ENCODE measurements at regions of chr18 and their contacts with region 1.

Region 1: DNA sequence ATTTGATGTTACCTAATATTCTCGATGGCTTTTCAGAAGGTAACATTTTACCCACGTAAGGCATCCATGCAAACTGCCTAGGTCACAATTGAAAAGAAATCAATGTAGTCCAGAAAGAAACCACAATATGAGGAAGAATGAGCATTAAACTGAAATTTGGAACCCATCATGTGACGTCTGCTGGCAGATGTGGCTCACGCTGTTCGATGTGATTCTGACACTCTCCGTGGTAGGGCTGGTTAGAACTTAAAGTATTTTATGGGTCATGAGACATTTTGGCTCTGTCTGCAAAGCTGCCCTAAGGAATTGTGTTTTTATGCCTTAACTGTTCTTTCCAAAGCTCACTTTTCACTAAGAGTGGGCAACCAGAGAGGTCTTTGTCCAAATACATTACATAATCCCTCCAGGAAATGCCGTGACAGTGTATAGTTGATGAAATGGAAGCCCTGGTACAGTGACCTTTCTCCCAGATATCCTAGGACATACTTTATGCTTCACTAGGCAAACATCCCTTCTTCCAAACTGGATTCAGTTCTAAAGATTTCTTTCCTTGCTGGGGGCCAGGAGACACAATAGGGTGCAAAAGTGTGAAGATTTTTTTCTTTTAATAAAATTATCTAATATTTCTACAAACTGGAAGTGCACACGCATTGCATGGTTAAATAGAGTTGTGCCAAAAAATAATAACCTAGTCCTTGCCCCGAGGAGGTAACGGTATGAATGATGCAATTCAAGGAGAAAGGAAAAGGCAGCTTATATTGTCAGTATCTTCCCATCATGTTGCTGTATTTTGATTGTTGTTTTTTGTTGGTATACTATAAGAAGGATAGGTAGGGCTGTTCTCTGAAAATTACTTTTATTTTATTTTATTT is 119.0 kb downstream of the AQP4 start:
- DNase-seq: peak; percentile 10
- ATAC-seq: no peak
- H3K4me3 ChIP-seq: no peak overlapping the region
- H3K27ac ChIP-seq: no peak overlapping the region
- H3K4me1 ChIP-seq: peaks cover 42% of the 10 kb centered on the region
- H3K27me3 ChIP-seq: no peaks in the 10 kb centered on the region
- CTCF ChIP-seq: no peak
- EP300 ChIP-seq: no peak
- POLR2A ChIP-seq: no peak
- RAD21 ChIP-seq: no peak

Region 2: DNA sequence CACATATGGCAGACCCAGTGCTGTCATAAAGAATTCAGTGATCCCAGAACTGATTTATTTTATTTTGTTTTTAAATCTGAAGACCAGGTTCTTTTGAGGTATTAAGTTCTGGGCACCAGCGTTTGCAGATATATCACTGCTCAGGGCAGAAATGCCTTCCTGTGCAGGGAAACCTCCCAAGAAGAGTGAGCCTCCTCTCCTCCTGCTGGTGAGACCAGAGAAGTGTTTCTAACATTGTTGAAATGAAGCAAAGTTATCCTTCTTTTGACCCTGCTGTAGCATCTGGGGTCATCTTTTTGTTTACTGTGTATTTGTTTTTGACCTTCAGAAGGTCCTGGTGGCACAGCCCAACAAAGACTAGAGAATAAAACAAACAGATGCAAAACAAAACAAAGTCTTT is 25.0 kb after region 1 on chr18:
- CTCF ChIA-PET with region 1: no interaction called
- POLR2A ChIA-PET with region 1: no interaction called
- in situ Hi-C with region 1: no loop called
- intact Hi-C with region 1: no loop called
- DNase-seq: peak; percentile 6
- ATAC-seq: peak; percentile 78
- H3K4me3 ChIP-seq: no peak overlapping the region
- H3K27ac ChIP-seq: no peak overlapping the region
- H3K4me1 ChIP-seq: no peaks in the 10 kb centered on the region
- H3K27me3 ChIP-seq: no peaks in the 10 kb centered on the region
- CTCF ChIP-seq: peak; percentile 56
- EP300 ChIP-seq: no peak
- POLR2A ChIP-seq: no peak
- RAD21 ChIP-seq: 0 out of 2 replicates have a peak, but pooled peaks have one; percentile 38

Region 3: DNA sequence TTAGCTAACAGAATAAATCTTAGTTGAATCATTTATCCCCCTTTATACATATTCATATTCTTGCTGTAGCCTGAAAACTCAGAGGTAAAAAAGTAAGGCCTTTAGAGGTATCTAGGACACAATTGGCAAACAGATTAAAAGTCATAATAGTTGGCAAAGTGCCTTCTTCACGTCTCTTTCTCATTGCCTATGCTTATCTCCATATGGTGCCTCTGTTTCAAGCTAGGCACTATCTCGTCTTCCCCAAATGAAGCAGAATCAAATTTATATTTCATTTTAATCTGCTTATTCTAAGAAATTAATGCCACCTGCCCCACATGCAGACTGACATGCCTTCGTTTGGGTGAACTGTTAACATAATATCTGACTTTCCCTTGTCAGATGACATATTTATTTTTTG is 1185.0 kb after region 1 on chr18:
- CTCF ChIA-PET with region 1: no interaction called
- POLR2A ChIA-PET with region 1: no interaction called
- in situ Hi-C with region 1: no loop called
- intact Hi-C with region 1: loop called (anchors 5 kb)
- DNase-seq: no peak
- ATAC-seq: no peak
- H3K4me3 ChIP-seq: no peak overlapping the region
- H3K27ac ChIP-seq: no peak overlapping the region
- H3K4me1 ChIP-seq: no peaks in the 10 kb centered on the region
- H3K27me3 ChIP-seq: no peaks in the 10 kb centered on the region; a peak in 1 of 5 replicates
- CTCF ChIP-seq: no peak
- EP300 ChIP-seq: no peak
- POLR2A ChIP-seq: no peak
- RAD21 ChIP-seq: no peak

Measured in HepG2 (cell line).